ENCODE measurements at regions of chr4 and their contacts with region 1.

Region 1: GRCh38 chr4:75989846-75990528 is 758 bp downstream of the SDAD1 start:
- DNase-seq: peak; percentile 27
- ATAC-seq: no peak
- H3K4me3 ChIP-seq: peak overlapping the region; percentile 51 to 88 (median 86)
- H3K4me3 Mint-ChIP-seq: peak overlapping the region; percentile 95
- H3K27ac ChIP-seq: peak overlapping the region; percentile 59 to 77
- H3K27ac Mint-ChIP-seq: peak overlapping the region; percentile 89
- H3K4me1 ChIP-seq: peaks cover 28 to 31% of the 10 kb centered on the region in 2 donors
- H3K4me1 Mint-ChIP-seq: peaks cover 37% of the 10 kb centered on the region
- H3K27me3 ChIP-seq: no peaks in the 10 kb centered on the region
- H3K27me3 Mint-ChIP-seq: peaks cover 9% of the 10 kb centered on the region
- CTCF ChIP-seq: no peak

Region 2: GRCh38 chr4:75030733-75031132 is 959.3 kb before region 1 on chr4:
- CTCF ChIA-PET with region 1: no interaction called
- POLR2A ChIA-PET with region 1: no interaction called
- intact Hi-C with region 1: no loop called
- DNase-seq: peak; percentile 33
- ATAC-seq: no peak
- H3K4me3 ChIP-seq: no peak overlapping the region
- H3K4me3 Mint-ChIP-seq: no peak overlapping the region
- H3K27ac ChIP-seq: no peak overlapping the region
- H3K27ac Mint-ChIP-seq: no peak overlapping the region
- H3K4me1 ChIP-seq: peaks cover 20 to 23% of the 10 kb centered on the region in 2 donors
- H3K4me1 Mint-ChIP-seq: peaks cover 29% of the 10 kb centered on the region
- H3K27me3 ChIP-seq: no peaks in the 10 kb centered on the region
- H3K27me3 Mint-ChIP-seq: no peaks in the 10 kb centered on the region
- CTCF ChIP-seq: no peak

Region 3: GRCh38 chr4:75673027-75673958 is 316.7 kb before region 1 on chr4 and contains the start of gene G3BP2:
- CTCF ChIA-PET with region 1: no interaction called
- POLR2A ChIA-PET with region 1: no interaction called
- intact Hi-C with region 1: loop called (anchors 2 kb)
- DNase-seq: peak; percentile 99
- ATAC-seq: peak; percentile 92
- H3K4me3 ChIP-seq: peak within 1 kb of the TSS; percentile 90 to 100 (median 96)
- H3K4me3 Mint-ChIP-seq: peak within 1 kb of the TSS; percentile 99
- H3K27ac ChIP-seq: peak within 1 kb of the TSS; percentile 95 to 99
- H3K27ac Mint-ChIP-seq: peak within 1 kb of the TSS; percentile 99
- H3K4me1 ChIP-seq: peaks cover 34 to 37% of the 10 kb centered on the region in 2 donors
- H3K4me1 Mint-ChIP-seq: peaks cover 44% of the 10 kb centered on the region
- H3K27me3 ChIP-seq: no peaks in the 10 kb centered on the region
- H3K27me3 Mint-ChIP-seq: no peaks in the 10 kb centered on the region
- CTCF ChIP-seq: no peak
- total RNA-seq, gene G3BP2: 154 and 155 TPM in 2 replicates

Region 4: GRCh38 chr4:75895744-75896314 is 94.2 kb before region 1 on chr4:
- CTCF ChIA-PET with region 1: interaction called, 17 read pairs
- POLR2A ChIA-PET with region 1: no interaction called
- intact Hi-C with region 1: loop called (anchors 2 kb)
- DNase-seq: peak; percentile 73
- ATAC-seq: peak; percentile 68
- H3K4me3 ChIP-seq: no peak overlapping the region
- H3K4me3 Mint-ChIP-seq: no peak overlapping the region
- H3K27ac ChIP-seq: no peak overlapping the region
- H3K27ac Mint-ChIP-seq: no peak overlapping the region
- H3K4me1 ChIP-seq: no peaks in the 10 kb centered on the region
- H3K4me1 Mint-ChIP-seq: no peaks in the 10 kb centered on the region
- H3K27me3 ChIP-seq: no peaks in the 10 kb centered on the region
- H3K27me3 Mint-ChIP-seq: no peaks in the 10 kb centered on the region
- CTCF ChIP-seq: peak; percentile 80

Region 5: DNA sequence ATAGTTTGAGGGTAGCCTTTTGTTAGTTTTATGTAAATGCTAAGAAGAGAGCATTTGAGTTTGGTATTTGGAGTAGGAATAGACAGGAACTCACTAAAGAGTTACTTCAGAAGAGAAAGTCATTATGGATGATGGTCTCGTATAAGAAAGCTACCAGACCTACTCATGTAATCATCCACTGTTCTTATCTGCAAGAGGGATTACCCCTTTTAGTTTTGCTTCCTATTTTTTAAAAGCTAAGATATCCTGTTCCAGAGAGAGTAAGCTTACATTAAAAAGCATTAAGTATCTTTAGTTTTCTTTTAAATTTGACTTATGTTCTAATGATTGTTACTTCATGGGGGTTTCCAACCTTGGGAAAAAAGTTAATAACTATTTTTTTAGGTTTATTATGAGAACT is 72.0 kb after region 1 on chr4:
- CTCF ChIA-PET with region 1: interaction called, 132 read pairs
- POLR2A ChIA-PET with region 1: no interaction called
- intact Hi-C with region 1: loop called (anchors 1 kb)
- DNase-seq: peak; percentile 71
- ATAC-seq: peak; percentile 96
- H3K4me3 ChIP-seq: peak overlapping the region in 1 of 5 experiments; percentile 31
- H3K4me3 Mint-ChIP-seq: peak overlapping the region; percentile 35
- H3K27ac ChIP-seq: peak overlapping the region; percentile 31 to 32
- H3K27ac Mint-ChIP-seq: peak overlapping the region; percentile 37
- H3K4me1 ChIP-seq: peaks cover 22 to 31% of the 10 kb centered on the region in 2 donors
- H3K4me1 Mint-ChIP-seq: peaks cover 29% of the 10 kb centered on the region
- H3K27me3 ChIP-seq: no peaks in the 10 kb centered on the region
- H3K27me3 Mint-ChIP-seq: no peaks in the 10 kb centered on the region
- CTCF ChIP-seq: no peak

Region 6: DNA sequence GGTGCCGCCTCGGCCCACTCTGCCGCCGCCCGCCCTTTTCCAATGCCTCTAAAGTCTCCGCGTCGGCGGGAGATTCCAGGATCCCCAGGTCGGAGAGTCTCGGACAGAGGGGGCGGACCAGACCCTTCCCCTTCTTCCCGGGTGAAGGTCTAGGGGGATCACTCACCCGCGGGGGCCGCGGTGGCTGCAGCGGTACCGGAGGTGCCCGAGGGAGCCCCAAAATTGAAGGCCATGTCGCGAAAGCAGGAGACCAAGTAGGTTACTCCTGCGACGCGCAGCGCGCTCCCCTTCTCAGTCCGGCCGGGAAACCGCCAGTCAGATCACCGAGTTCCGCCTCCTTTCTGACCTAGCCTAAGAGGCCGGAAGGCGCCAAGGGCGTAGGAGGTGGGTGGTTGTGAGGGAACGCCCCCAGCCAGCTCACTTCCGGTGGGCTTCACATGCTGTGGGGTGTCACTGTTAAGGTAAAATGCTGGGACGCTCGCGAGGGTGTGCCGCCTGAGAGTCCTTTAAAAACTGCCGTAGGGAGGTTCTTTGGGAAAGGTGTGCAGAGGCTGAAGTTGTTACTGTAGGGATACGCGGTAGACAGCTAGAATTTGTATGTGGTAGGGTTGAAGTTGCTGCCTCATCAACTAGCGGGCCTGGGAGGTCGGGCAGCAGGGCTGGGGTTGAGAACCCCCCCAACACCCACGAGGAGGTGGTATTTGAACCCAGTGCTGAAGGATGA is 158.3 kb after region 1 on chr4 and contains the start of gene NUP54:
- CTCF ChIA-PET with region 1: interaction called, 4 read pairs
- POLR2A ChIA-PET with region 1: interaction called, 3 read pairs
- intact Hi-C with region 1: loop called (anchors 1 kb)
- DNase-seq: peak; percentile 95
- ATAC-seq: peak; percentile 98
- H3K4me3 ChIP-seq: peak within 1 kb of the TSS; percentile 71 to 98 (median 97)
- H3K4me3 Mint-ChIP-seq: peak within 1 kb of the TSS; percentile 98
- H3K27ac ChIP-seq: peak within 1 kb of the TSS; percentile 77 to 91
- H3K27ac Mint-ChIP-seq: peak within 1 kb of the TSS; percentile 89
- H3K4me1 ChIP-seq: peaks cover 22 to 28% of the 10 kb centered on the region in 2 donors
- H3K4me1 Mint-ChIP-seq: peaks cover 35% of the 10 kb centered on the region
- H3K27me3 ChIP-seq: no peaks in the 10 kb centered on the region
- H3K27me3 Mint-ChIP-seq: no peaks in the 10 kb centered on the region
- CTCF ChIP-seq: no peak
- total RNA-seq, gene NUP54: 71.0 and 71.4 TPM in 2 replicates

Region 7: DNA sequence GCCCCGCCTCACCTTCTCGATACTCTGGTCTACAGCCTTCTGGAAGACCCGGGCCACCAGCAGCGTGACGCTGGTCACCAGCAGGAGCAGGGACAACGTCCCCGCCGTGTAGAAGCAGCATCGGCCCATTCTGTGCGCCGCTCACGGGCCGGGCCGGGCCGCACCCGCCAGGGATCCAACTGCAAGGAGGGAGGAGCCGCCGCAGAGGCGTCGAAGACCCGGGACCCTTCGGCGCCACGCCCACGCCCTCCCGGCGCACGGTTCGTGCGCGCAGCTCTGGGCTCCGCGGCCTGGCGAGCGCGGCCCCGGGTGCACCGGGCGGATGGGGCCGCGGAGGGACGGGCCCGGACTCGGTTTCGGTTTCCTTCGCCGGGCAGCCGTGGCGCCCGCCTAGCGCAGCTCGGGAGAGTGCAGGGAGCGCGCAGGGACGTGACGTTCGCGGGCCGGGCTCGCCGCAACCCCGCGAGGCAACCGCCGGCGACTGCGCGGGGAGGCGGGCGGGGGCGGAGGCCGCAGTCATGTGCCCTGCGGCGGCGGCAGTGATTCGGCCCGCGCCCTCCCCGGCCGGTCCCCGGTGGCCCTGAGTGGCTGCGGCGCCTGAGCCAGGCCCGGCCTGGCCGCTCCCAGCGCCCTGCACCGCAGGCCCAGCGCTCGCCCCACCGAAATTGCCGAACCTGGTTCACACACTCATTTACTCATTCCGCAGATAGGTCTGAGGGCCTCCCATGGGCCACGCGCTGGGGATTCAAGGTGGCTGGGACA is 223.6 kb after region 1 on chr4 and contains the start of gene SCARB2:
- CTCF ChIA-PET with region 1: no interaction called
- POLR2A ChIA-PET with region 1: no interaction called
- intact Hi-C with region 1: loop called (anchors 5 kb)
- DNase-seq: peak; percentile 91
- ATAC-seq: peak; percentile 79
- H3K4me3 ChIP-seq: peak within 1 kb of the TSS; percentile 54 to 87 (median 71)
- H3K4me3 Mint-ChIP-seq: peak within 1 kb of the TSS; percentile 89
- H3K27ac ChIP-seq: peak within 1 kb of the TSS; percentile 85 to 86
- H3K27ac Mint-ChIP-seq: peak within 1 kb of the TSS; percentile 96
- H3K4me1 ChIP-seq: peaks cover 47 to 49% of the 10 kb centered on the region in 2 donors
- H3K4me1 Mint-ChIP-seq: peaks cover 47% of the 10 kb centered on the region
- H3K27me3 ChIP-seq: no peaks in the 10 kb centered on the region
- H3K27me3 Mint-ChIP-seq: no peaks in the 10 kb centered on the region
- CTCF ChIP-seq: no peak
- total RNA-seq, gene SCARB2: 30.3 and 31.5 TPM in 2 replicates

Region 8: GRCh38 chr4:77862478-77863216 is 1872.7 kb after region 1 on chr4 and contains the start of gene MRPL1:
- CTCF ChIA-PET with region 1: no interaction called
- POLR2A ChIA-PET with region 1: no interaction called
- intact Hi-C with region 1: loop called (anchors 5 kb)
- DNase-seq: peak; percentile 95
- ATAC-seq: peak; percentile 86
- H3K4me3 ChIP-seq: peak within 1 kb of the TSS; percentile 68 to 98 (median 80)
- H3K4me3 Mint-ChIP-seq: peak within 1 kb of the TSS; percentile 99
- H3K27ac ChIP-seq: peak within 1 kb of the TSS; percentile 99 to 100
- H3K27ac Mint-ChIP-seq: peak within 1 kb of the TSS; percentile 98
- H3K4me1 ChIP-seq: peaks cover 17 to 21% of the 10 kb centered on the region in 2 donors
- H3K4me1 Mint-ChIP-seq: peaks cover 41% of the 10 kb centered on the region
- H3K27me3 ChIP-seq: no peaks in the 10 kb centered on the region
- H3K27me3 Mint-ChIP-seq: no peaks in the 10 kb centered on the region
- CTCF ChIP-seq: no peak
- total RNA-seq, gene MRPL1: 22.7 and 23.3 TPM in 2 replicates